Activated CD8-positive, alpha-beta T cell treated with anti-CD3 and anti-CD28 coated beads for 36 hours (primary cell): ENCODE measurements at regions of chr17 and their contacts with region 1.

Region 1: GRCh38 chr17:78865682-78866390 is 25.2 kb upstream of the USP36 start:
- DNase-seq: peak; percentile 69
- ATAC-seq: peak; percentile 86
- H3K4me3 Mint-ChIP-seq: no peak overlapping the region
- H3K27ac Mint-ChIP-seq: no peak overlapping the region
- H3K4me1 Mint-ChIP-seq: no peaks in the 10 kb centered on the region
- H3K27me3 Mint-ChIP-seq: no peaks in the 10 kb centered on the region
- CTCF ChIP-seq: peak; percentile 94

Region 2: DNA sequence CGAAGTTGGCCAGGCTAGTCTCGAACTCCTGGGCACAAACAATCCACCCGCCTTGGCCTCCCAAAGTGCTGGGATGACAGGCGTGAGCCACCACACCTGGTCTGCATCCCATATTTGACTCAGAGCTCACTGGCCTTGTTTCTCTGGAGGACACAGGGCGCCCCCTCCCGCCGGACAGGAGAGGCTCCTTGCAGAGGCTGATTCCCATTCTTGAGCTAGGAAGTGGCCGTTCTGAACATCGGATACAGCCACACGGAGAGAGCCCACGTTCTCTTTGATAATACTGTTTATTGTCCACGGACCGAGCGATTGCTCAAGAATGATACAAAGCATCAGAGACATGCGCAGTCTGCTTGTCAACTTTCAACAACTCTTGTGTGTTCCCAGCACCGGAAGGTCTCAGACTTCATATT is 13.1 kb before region 1 on chr17:
- CTCF ChIA-PET with region 1: interaction called, 30 read pairs
- POLR2A ChIA-PET with region 1: interaction called, 3 read pairs
- intact Hi-C with region 1: no loop called
- DNase-seq: no peak
- ATAC-seq: no peak
- H3K4me3 Mint-ChIP-seq: no peak overlapping the region
- H3K27ac Mint-ChIP-seq: no peak overlapping the region
- H3K4me1 Mint-ChIP-seq: no peaks in the 10 kb centered on the region
- H3K27me3 Mint-ChIP-seq: no peaks in the 10 kb centered on the region
- CTCF ChIP-seq: no peak

Region 3: DNA sequence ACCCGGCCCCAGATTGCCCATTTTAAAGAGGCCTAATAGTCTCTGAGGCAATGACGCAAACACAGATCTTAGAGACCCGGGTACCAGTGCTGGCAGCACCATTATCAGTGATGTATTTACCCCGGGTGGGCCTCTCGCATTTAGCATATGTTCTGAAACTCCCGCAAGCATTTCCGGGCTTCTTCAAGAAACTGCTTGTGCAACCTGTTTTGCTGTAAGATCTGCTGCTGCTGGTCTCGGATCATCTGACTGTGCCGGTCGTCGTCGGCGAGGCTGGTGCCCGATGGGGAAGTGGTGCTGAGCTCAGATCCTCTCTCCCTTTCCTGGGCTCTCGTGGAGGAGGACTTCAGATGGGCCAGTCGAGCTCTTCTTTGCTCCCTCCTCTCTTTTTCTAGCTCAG is 24.7 kb after region 1 on chr17:
- CTCF ChIA-PET with region 1: interaction called, 13 read pairs
- POLR2A ChIA-PET with region 1: no interaction called
- intact Hi-C with region 1: no loop called
- DNase-seq: peak; percentile 79
- ATAC-seq: peak; percentile 84
- H3K4me3 Mint-ChIP-seq: peak overlapping the region; percentile 28
- H3K27ac Mint-ChIP-seq: peak overlapping the region; percentile 65
- H3K4me1 Mint-ChIP-seq: peaks cover 29% of the 10 kb centered on the region
- H3K27me3 Mint-ChIP-seq: no peaks in the 10 kb centered on the region
- CTCF ChIP-seq: no peak

Region 4: GRCh38 chr17:78953356-78954265 is 87.8 kb after region 1 on chr17:
- CTCF ChIA-PET with region 1: interaction called, 13 read pairs
- POLR2A ChIA-PET with region 1: no interaction called
- intact Hi-C with region 1: no loop called
- DNase-seq: no peak
- ATAC-seq: no peak
- H3K4me3 Mint-ChIP-seq: no peak overlapping the region
- H3K27ac Mint-ChIP-seq: no peak overlapping the region
- H3K4me1 Mint-ChIP-seq: no peaks in the 10 kb centered on the region
- H3K27me3 Mint-ChIP-seq: no peaks in the 10 kb centered on the region
- CTCF ChIP-seq: no peak

Region 5: GRCh38 chr17:78970834-78971773 is 105.3 kb after region 1 on chr17:
- CTCF ChIA-PET with region 1: interaction called, 34 read pairs
- POLR2A ChIA-PET with region 1: interaction called, 3 read pairs
- intact Hi-C with region 1: loop called (anchors 5 kb)
- DNase-seq: peak; percentile 91
- ATAC-seq: peak; percentile 80
- H3K4me3 Mint-ChIP-seq: no peak overlapping the region
- H3K27ac Mint-ChIP-seq: no peak overlapping the region
- H3K4me1 Mint-ChIP-seq: peaks cover 5% of the 10 kb centered on the region
- H3K27me3 Mint-ChIP-seq: no peaks in the 10 kb centered on the region
- CTCF ChIP-seq: peak; percentile 95